ENCODE measurements at regions of chr1 and their contacts with region 1.

Region 1: GRCh38 chr1:155172732-155173477 is at the start of gene KRTCAP2:
- DNase-seq: peak; percentile 96
- ATAC-seq: peak; percentile 88
- total RNA-seq, gene KRTCAP2: 162 TPM

Region 2: GRCh38 chr1:154635162-154635561 is 537.7 kb before region 1 on chr1:
- intact Hi-C with region 1: no loop called
- DNase-seq: no peak
- ATAC-seq: no peak

Region 3: GRCh38 chr1:154974808-154975408 is 198.0 kb before region 1 on chr1:
- intact Hi-C with region 1: loop called (anchors 5 kb)
- DNase-seq: peak; percentile 97
- ATAC-seq: peak; percentile 81

Region 4: GRCh38 chr1:155127105-155127964 is 45.6 kb before region 1 on chr1 and contains the start of gene EFNA1:
- intact Hi-C with region 1: loop called (anchors 10 kb)
- DNase-seq: peak; percentile 87
- ATAC-seq: peak; percentile 67
- total RNA-seq, gene EFNA1: 49.0 TPM